Heart left ventricle (tissue), 16 donors: ENCODE measurements at regions of chr16 and their contacts with region 1.

Region 1: DNA sequence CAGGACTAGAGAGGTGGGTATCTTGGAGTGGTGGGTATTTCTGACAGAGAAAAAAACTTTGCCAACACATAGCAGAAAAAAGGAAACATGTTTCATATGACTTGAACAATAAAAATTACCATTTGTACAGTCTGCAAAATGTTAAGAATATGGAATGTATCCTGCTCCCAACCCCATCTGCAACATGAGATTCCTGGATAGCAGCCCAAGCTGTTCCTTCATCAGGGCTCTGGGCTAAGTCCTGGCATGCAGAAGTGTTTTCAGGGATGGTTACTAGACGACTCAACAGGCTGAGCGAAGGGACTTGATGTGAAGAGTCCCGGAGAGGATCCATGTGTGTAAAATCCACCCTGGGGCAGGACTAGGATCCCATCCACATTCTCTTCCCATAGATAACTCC is 121.0 kb upstream of the IRX3 start:
- DNase-seq: no peak
- ATAC-seq: no peak
- H3K4me3 ChIP-seq: no peak overlapping the region
- H3K27ac ChIP-seq: no peak overlapping the region
- H3K4me1 ChIP-seq: peaks cover 0 to 21% (median 11%) of the 10 kb centered on the region in 12 donors
- H3K27me3 ChIP-seq: peaks cover 0 to 3% (median 0%) of the 10 kb centered on the region in 9 donors
- CTCF ChIP-seq: no peak
- POLR2A ChIP-seq: no peak

Region 2: DNA sequence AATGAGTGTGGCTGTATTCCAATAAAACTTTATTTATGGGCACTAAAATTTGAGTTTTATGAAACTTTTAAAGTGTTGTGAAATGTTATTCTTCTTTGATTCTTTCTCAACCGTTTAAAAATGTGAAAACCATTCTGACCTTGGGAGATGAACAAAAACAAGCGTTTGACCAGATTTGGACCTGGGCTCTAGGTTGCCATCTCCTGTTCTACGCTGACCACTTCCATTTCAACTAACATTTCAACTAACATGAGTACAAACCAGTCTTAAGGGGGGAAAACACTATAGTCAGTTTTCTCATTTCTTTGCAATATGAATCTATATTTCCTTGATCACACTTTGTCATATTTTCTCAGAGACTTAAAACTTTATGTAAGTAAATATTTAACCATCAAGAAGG is 404.6 kb after region 1 on chr16:
- intact Hi-C with region 1: loop called in 2 of 10 experiments (anchors 5 to 10 kb)
- DNase-seq: no peak
- ATAC-seq: peak in 1 of 4 donors; percentile 63
- H3K4me3 ChIP-seq: no peak overlapping the region
- H3K27ac ChIP-seq: no peak overlapping the region
- H3K4me1 ChIP-seq: peaks cover 0 to 6% (median 0%) of the 10 kb centered on the region in 12 donors
- H3K27me3 ChIP-seq: no peaks in the 10 kb centered on the region
- CTCF ChIP-seq: peak in 10 of 12 donors; percentile 8 to 56 (median 26)
- POLR2A ChIP-seq: no peak

Region 3: DNA sequence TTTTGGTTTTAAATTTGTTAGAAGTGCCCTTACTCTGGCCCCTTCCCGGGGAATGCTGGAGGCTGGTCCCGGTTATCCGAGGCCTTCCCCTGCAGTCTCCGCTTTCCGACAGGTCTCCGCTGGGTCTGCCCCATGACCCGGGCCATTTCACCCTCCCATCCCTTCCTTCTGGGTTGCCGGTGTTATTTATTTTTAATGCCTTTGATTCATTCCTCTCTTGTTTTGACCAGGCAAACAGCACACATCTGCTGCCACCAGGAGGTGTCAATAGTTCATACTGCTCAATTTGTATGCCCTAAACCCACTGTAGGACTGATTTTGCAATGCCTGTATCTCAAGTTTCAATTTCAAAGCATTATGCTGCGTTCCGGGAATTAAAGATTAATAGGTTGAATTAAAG is 409.9 kb after region 1 on chr16:
- intact Hi-C with region 1: loop called in 2 of 10 experiments (anchors 5 to 10 kb)
- DNase-seq: peak in 2 of 5 donors; percentile 8 to 33
- ATAC-seq: peak in 3 of 4 donors; percentile 47 to 69 (median 69)
- H3K4me3 ChIP-seq: no peak overlapping the region
- H3K27ac ChIP-seq: no peak overlapping the region
- H3K4me1 ChIP-seq: peaks cover 0 to 6% (median 0%) of the 10 kb centered on the region in 12 donors
- H3K27me3 ChIP-seq: peaks cover 0 to 7% (median 0%) of the 10 kb centered on the region in 9 donors
- CTCF ChIP-seq: peak in 9 of 12 donors; percentile 6 to 55 (median 42)
- POLR2A ChIP-seq: no peak